ENCODE measurements at regions of chr1 and their contacts with region 1.

Region 1: DNA sequence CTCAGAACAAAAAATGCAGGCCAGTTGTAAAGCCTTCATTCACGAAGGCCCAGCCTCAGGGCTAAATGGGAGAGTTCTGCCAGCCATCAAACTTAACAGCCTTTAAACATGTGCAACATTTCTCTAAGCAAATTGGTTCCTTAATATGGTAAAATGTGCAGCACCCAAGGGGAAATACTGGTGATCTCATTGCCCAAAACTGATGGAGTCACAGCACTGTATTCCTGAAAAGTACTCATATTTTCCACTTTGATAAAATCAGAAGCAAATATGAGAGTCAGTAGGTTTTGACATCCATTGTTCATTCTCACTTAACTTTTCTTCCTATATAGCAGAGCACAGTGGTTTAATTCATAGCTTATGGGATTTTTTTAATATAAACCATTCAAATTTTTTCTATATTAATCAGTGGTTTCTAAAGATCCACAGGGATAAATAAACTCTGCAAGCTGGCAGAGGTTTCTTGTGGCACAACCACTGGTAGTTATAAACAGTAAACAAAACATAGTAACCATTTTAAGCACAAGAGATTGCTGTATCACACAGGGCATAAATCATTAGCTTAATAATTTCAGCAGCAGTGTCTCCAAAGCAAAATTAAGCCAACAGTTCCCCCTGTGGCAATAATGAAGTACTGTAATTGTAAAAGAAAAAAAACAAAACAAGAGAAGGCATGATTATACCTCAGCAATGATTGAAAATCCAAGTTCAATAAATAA is 106.9 kb upstream of the LYPLAL1 start:
- DNase-seq: peak; percentile 88
- ATAC-seq: peak; percentile 84
- H3K4me3 ChIP-seq: no peak overlapping the region
- H3K27ac ChIP-seq: peak overlapping the region; percentile 61
- H3K4me1 ChIP-seq: peaks cover 17% of the 10 kb centered on the region
- H3K27me3 ChIP-seq: no peaks in the 10 kb centered on the region
- CTCF ChIP-seq: peak; percentile 97

Region 2: GRCh38 chr1:218226005-218226404 is 840.8 kb before region 1 on chr1:
- CTCF ChIA-PET with region 1: no interaction called
- POLR2A ChIA-PET with region 1: no interaction called
- intact Hi-C with region 1: no loop called
- DNase-seq: no peak
- ATAC-seq: no peak
- H3K4me3 ChIP-seq: no peak overlapping the region
- H3K27ac ChIP-seq: no peak overlapping the region
- H3K4me1 ChIP-seq: no peaks in the 10 kb centered on the region
- H3K27me3 ChIP-seq: no peaks in the 10 kb centered on the region
- CTCF ChIP-seq: no peak

Region 3: GRCh38 chr1:218345673-218346390 is 721.0 kb before region 1 on chr1:
- CTCF ChIA-PET with region 1: interaction called, 14 read pairs
- POLR2A ChIA-PET with region 1: no interaction called
- intact Hi-C with region 1: loop called (anchors 1 kb)
- DNase-seq: peak; percentile 89
- ATAC-seq: peak; percentile 53
- H3K4me3 ChIP-seq: peak overlapping the region; percentile 78
- H3K27ac ChIP-seq: peak overlapping the region; percentile 84
- H3K4me1 ChIP-seq: peaks cover 35% of the 10 kb centered on the region
- H3K27me3 ChIP-seq: no peaks in the 10 kb centered on the region
- CTCF ChIP-seq: no peak

Region 4: GRCh38 chr1:218620956-218621355 is 445.8 kb before region 1 on chr1:
- CTCF ChIA-PET with region 1: no interaction called
- POLR2A ChIA-PET with region 1: no interaction called
- intact Hi-C with region 1: loop called (anchors 1 kb)
- DNase-seq: peak; percentile 87
- ATAC-seq: peak; percentile 99
- H3K4me3 ChIP-seq: no peak overlapping the region
- H3K27ac ChIP-seq: peak overlapping the region; percentile 57
- H3K4me1 ChIP-seq: peaks cover 14% of the 10 kb centered on the region
- H3K27me3 ChIP-seq: no peaks in the 10 kb centered on the region
- CTCF ChIP-seq: no peak

Region 5: GRCh38 chr1:218779341-218780100 is 287.3 kb before region 1 on chr1:
- CTCF ChIA-PET with region 1: no interaction called
- POLR2A ChIA-PET with region 1: no interaction called
- intact Hi-C with region 1: loop called (anchors 5 kb)
- DNase-seq: peak; percentile 99
- ATAC-seq: peak; percentile 94
- H3K4me3 ChIP-seq: no peak overlapping the region
- H3K27ac ChIP-seq: peak overlapping the region; percentile 78
- H3K4me1 ChIP-seq: peaks cover 27% of the 10 kb centered on the region
- H3K27me3 ChIP-seq: no peaks in the 10 kb centered on the region
- CTCF ChIP-seq: peak; percentile 53

Region 6: GRCh38 chr1:218938259-218938658 is 128.5 kb before region 1 on chr1:
- CTCF ChIA-PET with region 1: no interaction called
- POLR2A ChIA-PET with region 1: no interaction called
- intact Hi-C with region 1: loop called (anchors 2 kb)
- DNase-seq: peak; percentile 83
- ATAC-seq: peak; percentile 72
- H3K4me3 ChIP-seq: no peak overlapping the region
- H3K27ac ChIP-seq: peak overlapping the region; percentile 70
- H3K4me1 ChIP-seq: peaks cover 24% of the 10 kb centered on the region
- H3K27me3 ChIP-seq: no peaks in the 10 kb centered on the region
- CTCF ChIP-seq: no peak

Region 7: DNA sequence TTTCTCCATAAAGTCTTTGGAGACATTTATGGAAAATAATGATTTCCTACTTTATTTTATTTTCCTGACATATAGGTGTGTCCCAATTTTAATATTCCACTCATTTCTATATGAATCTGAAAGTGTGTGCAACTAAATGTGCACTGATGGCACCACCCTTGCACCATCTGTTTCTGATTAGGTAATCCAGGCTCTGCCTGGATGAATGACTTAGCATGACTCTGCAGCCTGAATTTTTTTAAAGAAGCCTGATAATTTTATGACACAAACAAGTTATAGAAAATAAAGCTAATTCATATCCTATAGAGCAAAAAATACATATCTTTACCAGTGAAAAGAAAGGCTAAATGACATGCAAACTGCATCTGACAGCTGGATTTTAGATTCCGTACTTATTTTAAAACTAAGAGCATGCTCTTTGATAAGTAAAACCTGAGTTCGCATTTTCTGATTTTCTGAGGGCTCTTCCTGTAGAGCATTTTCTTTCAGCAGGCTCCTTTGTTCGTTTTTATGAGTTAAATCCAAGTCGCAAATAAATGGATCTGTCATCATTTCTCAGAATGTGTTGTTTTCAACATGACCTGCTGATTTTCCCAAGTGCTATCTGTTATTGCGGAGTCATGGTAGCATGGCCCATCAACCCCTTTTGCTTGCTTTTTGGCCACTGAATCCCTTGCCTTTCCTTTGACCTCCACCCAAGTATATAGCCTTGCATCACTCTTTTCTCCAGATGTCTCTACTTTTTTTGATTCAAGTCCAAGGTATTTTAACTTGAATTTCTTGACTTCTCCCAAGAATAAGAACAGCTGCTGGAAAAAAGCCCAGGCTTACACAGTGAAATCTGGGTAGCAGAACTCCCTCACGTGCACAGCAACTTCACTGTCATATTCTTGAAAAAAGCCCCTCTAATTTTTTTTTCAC is 54.1 kb after region 1 on chr1:
- CTCF ChIA-PET with region 1: no interaction called
- POLR2A ChIA-PET with region 1: no interaction called
- intact Hi-C with region 1: no loop called
- DNase-seq: no peak
- ATAC-seq: no peak
- H3K4me3 ChIP-seq: no peak overlapping the region
- H3K27ac ChIP-seq: no peak overlapping the region
- H3K4me1 ChIP-seq: no peaks in the 10 kb centered on the region
- H3K27me3 ChIP-seq: no peaks in the 10 kb centered on the region
- CTCF ChIP-seq: no peak

Region 8: GRCh38 chr1:219566951-219567947 is 500.5 kb after region 1 on chr1:
- CTCF ChIA-PET with region 1: interaction called, 8 read pairs
- POLR2A ChIA-PET with region 1: no interaction called
- intact Hi-C with region 1: loop called (anchors 1 kb)
- DNase-seq: peak; percentile 87
- ATAC-seq: peak; percentile 69
- H3K4me3 ChIP-seq: no peak overlapping the region
- H3K27ac ChIP-seq: peak overlapping the region; percentile 34
- H3K4me1 ChIP-seq: peaks cover 29% of the 10 kb centered on the region
- H3K27me3 ChIP-seq: no peaks in the 10 kb centered on the region
- CTCF ChIP-seq: peak; percentile 99

Measured in PC-3 (cell line).